HCT116 (cell line): ENCODE measurements at regions of chr2 and their contacts with region 1.

Region 1: GRCh38 chr2:197453161-197453914 is at the start of gene COQ10B:
- DNase-seq: peak; percentile 99
- ATAC-seq: peak; percentile 95
- H3K4me3 ChIP-seq: peak within 1 kb of the TSS; percentile 84 to 99
- H3K27ac ChIP-seq: peak within 1 kb of the TSS; percentile 70
- H3K4me1 ChIP-seq: peaks cover 4 to 13% of the 10 kb centered on the region in 2 experiments; a peak in 2 of 4 replicates
- H3K27me3 ChIP-seq: no peaks in the 10 kb centered on the region
- CTCF ChIP-seq: no peak; a peak in 1 of 6 replicates
- POLR2A ChIP-seq: peak; percentile 53
- RAD21 ChIP-seq: no peak
- total RNA-seq, gene COQ10B: 20.4 TPM

Region 2: DNA sequence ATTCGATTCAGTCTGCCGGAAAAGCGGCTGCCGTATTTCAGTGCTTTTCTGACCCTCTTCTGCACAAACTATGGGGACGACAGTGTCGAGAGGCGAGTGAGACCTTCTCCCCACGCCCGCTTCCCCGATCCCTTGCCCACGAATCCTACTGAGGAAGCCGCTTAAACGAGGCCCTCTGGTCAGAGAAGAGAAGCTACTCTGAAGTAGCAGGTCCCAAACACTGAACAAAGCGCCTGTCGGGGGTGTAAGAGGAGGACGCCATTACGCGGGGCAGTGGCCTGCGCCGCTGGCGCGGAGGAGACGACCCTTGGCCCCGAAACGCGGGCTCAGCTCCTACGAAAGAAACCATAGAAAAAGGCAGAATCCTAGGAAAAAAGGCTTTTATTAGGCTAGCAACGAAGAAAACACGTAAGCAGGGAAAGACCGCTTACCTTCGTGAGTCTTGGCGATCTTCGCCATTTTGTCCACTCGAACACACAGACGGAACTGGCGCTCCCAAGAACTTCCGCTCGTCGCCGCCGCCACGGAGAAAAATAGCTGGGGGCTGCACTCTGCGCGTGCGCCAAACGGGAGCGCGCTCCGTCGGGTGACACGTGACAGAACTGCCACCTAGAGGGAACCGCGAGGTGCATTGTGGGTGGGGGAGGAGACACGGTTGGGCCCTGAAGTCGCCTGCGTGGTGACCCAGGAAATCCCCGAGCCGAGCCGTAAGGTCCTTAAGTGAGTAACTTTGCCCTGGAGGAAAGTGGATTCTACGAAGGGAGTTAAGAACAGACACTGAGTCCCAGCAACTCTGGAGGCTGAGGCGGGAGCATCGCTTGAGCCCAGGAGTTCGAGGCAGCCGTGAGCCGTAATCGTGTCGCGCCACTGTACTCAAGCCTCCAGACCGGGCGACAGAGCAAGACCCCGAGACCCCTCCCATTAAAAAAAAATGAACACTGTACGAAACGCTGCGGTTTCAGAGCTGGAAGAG is 18.5 kb before region 1 on chr2 and contains the start of gene SF3B1:
- CTCF ChIA-PET with region 1: no interaction called
- POLR2A ChIA-PET with region 1: interaction called, 14 read pairs
- RAD21 ChIA-PET with region 1: no interaction called
- intact Hi-C with region 1: loop called (anchors 1 kb)
- DNase-seq: peak; percentile 95
- ATAC-seq: peak; percentile 93
- H3K4me3 ChIP-seq: peak within 1 kb of the TSS; percentile 84 to 100
- H3K27ac ChIP-seq: peak within 1 kb of the TSS; percentile 78
- H3K4me1 ChIP-seq: peaks cover 6 to 22% of the 10 kb centered on the region in 2 experiments; a peak in 2 of 4 replicates
- H3K27me3 ChIP-seq: no peaks in the 10 kb centered on the region
- CTCF ChIP-seq: no peak
- POLR2A ChIP-seq: peak; percentile 92
- RAD21 ChIP-seq: no peak
- total RNA-seq, gene SF3B1: 282 TPM